Stomach (tissue), 19 donors: ENCODE measurements at regions of chr1 and their contacts with region 1.

Region 1: GRCh38 chr1:11790880-11791715 is 14.7 kb downstream of the MTHFR start:
- DNase-seq: peak; percentile 92 to 96
- H3K4me3 ChIP-seq: no peak overlapping the region
- H3K27ac ChIP-seq: peak overlapping the region; percentile 72 to 97 (median 93)
- H3K4me1 ChIP-seq: peaks cover 56 to 76% (median 68%) of the 10 kb centered on the region in 4 donors
- H3K27me3 ChIP-seq: no peaks in the 10 kb centered on the region
- CTCF ChIP-seq: no peak
- EP300 ChIP-seq: peak; percentile 98
- POLR2A ChIP-seq: peak in 1 of 4 donors; percentile 35

Region 2: DNA sequence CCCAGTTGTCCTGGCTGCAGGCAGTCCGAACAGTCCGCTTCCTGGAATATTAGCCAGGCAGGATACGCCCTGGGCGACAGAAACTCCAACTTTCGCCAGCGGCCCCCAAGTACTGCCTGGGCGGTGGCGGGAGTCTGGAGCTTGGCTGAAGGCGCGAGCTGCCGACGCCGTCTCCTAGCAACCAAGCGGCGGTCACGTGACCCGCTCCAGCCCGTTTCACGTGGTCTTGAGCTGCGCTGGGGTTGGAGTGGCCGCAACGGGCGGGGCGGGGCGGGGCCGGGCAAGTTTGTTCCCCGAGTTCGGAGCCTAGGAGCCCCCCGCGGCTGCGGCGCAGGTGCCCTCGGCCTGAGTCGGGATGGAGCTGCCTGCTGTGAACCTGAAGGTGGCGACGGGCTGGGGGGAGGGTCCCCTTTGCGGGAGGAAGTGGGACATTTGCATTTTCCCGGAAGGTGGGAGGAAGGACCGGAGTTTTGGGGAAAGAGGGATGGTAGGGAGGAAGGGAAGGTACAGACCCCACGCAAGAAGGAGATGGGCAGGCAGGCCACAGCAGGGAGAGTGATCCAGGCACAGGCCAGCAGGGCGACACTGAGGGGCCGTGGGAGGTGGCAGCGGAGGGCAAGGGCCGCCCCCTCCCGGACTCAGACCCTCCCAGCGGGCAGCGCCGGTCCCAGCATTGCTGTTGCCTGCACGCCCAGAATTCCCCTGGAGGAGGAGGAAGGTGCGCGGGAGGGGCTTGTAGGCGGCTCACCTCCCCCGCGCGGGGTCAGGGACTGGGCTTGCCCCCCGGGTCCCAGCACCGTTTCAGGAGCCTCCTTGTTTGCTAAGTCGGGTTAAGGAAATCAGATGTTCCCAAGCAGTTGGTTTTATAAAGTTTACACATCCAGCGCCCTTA is 55.0 kb before region 1 on chr1 and contains the start of gene AGTRAP:
- intact Hi-C with region 1: loop called (anchors 10 kb)
- DNase-seq: peak; percentile 97 to 99
- H3K4me3 ChIP-seq: peak within 1 kb of the TSS; percentile 78 to 93 (median 88)
- H3K27ac ChIP-seq: peak within 1 kb of the TSS; percentile 82 to 97 (median 91)
- H3K4me1 ChIP-seq: peaks cover 42 to 79% (median 58%) of the 10 kb centered on the region in 4 donors
- H3K27me3 ChIP-seq: no peaks in the 10 kb centered on the region
- CTCF ChIP-seq: no peak
- EP300 ChIP-seq: no peak
- POLR2A ChIP-seq: no peak
- total RNA-seq, gene AGTRAP: 4.1 to 76.3 (median 21.6) TPM